ENCODE measurements at regions of chr12 and their contacts with region 1.

Region 1: GRCh38 chr12:4307593-4308333 is 13.2 kb upstream of the TIGAR start:
- DNase-seq: peak; percentile 87 to 89
- H3K4me3 ChIP-seq: peak overlapping the region; percentile 12; the same call in 1 of the 2 replicates
- H3K4me1 ChIP-seq: peaks cover 14% of the 10 kb centered on the region
- H3K27me3 ChIP-seq: no peaks in the 10 kb centered on the region

Region 2: GRCh38 chr12:4538207-4539160 is 230.7 kb after region 1 on chr12 and contains the start of gene RAD51AP1:
- in situ Hi-C with region 1: loop called (anchors 10 kb)
- DNase-seq: peak; percentile 92 to 96
- H3K4me3 ChIP-seq: peak within 1 kb of the TSS; percentile 75
- H3K4me1 ChIP-seq: peaks cover 6% of the 10 kb centered on the region
- H3K27me3 ChIP-seq: no peaks in the 10 kb centered on the region

Measured in HAP-1 (cell line).